A549 (cell line): ENCODE measurements at regions of chr9 and their contacts with region 1.

Region 1: GRCh38 chr9:34637356-34638137 is at the start of gene SIGMAR1:
- DNase-seq: peak; percentile 87 to 93
- ATAC-seq: peak; percentile 87 to 92
- H3K4me3 ChIP-seq: peak within 1 kb of the TSS; percentile 73
- H3K27ac ChIP-seq: peak within 1 kb of the TSS; percentile 88 to 95
- H3K4me1 ChIP-seq: peaks cover 26% of the 10 kb centered on the region; the same call in 2 of the 3 replicates
- CTCF ChIP-seq: no peak
- EP300 ChIP-seq: no peak
- POLR2A ChIP-seq: peak; percentile 89
- RAD21 ChIP-seq: no peak
- polyA plus RNA-seq, gene SIGMAR1: 64.6 and 95.4 TPM in 2 replicates

Region 2: GRCh38 chr9:34611829-34612630 is 25.5 kb before region 1 on chr9 and contains the start of gene RPP25L:
- CTCF ChIA-PET with region 1: interaction called, 429 read pairs
- POLR2A ChIA-PET with region 1: interaction called, 4 read pairs
- DNase-seq: peak; percentile 78 to 86
- ATAC-seq: peak; percentile 85 to 95
- H3K4me3 ChIP-seq: peak within 1 kb of the TSS; percentile 75
- H3K27ac ChIP-seq: peak within 1 kb of the TSS; percentile 91 to 94
- H3K4me1 ChIP-seq: peaks cover 18% of the 10 kb centered on the region; the same call in 1 of the 3 replicates
- CTCF ChIP-seq: no peak; the same call in 2 of the 3 replicates
- EP300 ChIP-seq: no peak
- POLR2A ChIP-seq: peak; percentile 90
- RAD21 ChIP-seq: no peak
- polyA plus RNA-seq, gene RPP25L: 40.8 and 46.5 TPM in 2 replicates

Region 3: DNA sequence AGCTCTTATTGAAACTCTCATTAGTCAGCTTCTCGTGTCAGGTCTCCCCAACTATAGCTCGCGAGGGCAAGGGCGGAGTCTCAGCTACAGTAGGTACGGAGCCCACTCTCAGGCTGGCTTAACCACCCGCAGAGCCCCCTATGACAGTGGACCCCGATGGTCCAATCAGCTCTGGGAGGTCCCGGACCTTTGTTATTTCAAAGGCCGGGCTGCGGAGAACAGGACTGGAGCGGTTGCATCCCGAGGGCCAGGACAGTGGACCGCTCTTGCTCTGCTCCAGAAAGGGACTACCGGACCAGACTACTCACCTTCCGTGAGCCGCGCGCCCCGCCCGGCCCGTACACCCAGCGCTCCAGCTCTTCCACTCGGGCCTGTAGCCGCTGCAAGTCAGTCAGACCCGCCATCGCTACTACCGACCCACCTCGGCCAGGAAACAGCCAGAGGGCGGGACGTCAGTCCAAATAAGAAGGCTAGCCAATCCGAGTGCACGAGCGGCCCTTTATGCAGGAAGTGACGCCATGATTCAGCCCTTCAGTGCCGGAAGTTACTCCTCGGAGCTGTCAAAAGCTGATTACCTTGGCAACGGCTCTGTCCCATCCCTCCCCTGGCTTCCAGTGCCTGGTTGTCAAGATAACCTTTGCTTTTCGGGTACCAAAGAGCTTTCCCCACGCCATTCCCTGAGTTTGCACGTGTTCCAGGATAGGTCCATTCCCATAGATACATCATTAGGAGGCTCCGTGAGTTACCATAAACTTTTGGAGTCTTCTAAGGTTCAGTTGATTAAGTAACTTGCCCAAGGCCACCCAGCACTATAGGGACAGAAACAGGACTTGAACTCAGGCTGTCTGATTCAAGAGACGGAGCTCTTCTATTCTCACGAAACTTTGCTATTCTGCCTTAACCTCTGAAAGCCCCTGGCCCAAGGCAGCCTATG is 17.2 kb before region 1 on chr9 and contains the start of gene DCTN3:
- CTCF ChIA-PET with region 1: interaction called, 429 read pairs
- POLR2A ChIA-PET with region 1: interaction called, 12 read pairs
- DNase-seq: peak; percentile 93 to 97
- ATAC-seq: peak; percentile 96 to 99
- H3K4me3 ChIP-seq: peak within 1 kb of the TSS; percentile 81
- H3K27ac ChIP-seq: peak within 1 kb of the TSS; percentile 63 to 80
- H3K4me1 ChIP-seq: peaks cover 6% of the 10 kb centered on the region; the same call in 2 of the 3 replicates
- CTCF ChIP-seq: no peak
- EP300 ChIP-seq: no peak
- POLR2A ChIP-seq: peak; percentile 30; the same call in 1 of the 2 replicates
- RAD21 ChIP-seq: no peak
- polyA plus RNA-seq, gene DCTN3: 64.8 and 74.3 TPM in 2 replicates

Region 4: DNA sequence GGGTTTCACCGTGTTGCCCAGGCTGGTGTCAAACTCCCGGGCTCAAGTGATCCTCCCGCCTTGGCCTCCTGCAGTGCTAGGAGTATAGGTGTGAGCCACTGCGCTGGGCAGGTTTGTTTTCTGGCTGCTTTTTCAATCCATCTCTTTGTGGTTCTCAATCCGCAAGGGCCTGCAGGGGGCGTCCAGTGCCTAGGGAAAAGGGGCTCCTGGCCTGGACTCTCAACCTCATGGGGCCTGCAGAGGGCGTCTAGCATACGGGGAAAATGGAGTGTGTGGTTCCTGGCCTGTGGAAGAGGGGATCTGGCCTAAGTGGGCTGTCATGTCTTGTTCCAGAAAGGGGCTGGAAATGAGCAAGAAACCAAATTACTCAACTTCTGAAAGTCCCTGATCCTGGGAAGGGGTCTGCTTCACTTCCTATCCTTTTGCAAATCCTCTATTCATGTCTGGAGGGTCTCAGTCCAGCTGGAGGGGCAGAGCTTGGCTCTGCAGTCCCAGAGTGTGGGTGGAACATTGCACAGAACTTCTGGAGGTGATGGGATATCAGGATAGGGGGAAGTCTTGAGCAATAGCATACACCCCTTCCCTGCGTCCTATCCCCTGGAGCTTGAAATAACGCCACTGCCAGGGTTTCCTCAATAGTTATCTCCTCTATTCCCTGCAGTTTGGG is 37.6 kb after region 1 on chr9:
- CTCF ChIA-PET with region 1: interaction called, 10 read pairs
- POLR2A ChIA-PET with region 1: no interaction called
- DNase-seq: peak; percentile 79 to 84
- ATAC-seq: peak; percentile 93 to 99
- H3K4me3 ChIP-seq: no peak overlapping the region
- H3K27ac ChIP-seq: no peak overlapping the region
- H3K4me1 ChIP-seq: no peaks in the 10 kb centered on the region
- CTCF ChIP-seq: peak; percentile 79
- EP300 ChIP-seq: no peak
- POLR2A ChIP-seq: no peak
- RAD21 ChIP-seq: peak; percentile 70 to 88